Caco-2 (cell line): ENCODE measurements at regions of chrX and their contacts with region 1.

Region 1: DNA sequence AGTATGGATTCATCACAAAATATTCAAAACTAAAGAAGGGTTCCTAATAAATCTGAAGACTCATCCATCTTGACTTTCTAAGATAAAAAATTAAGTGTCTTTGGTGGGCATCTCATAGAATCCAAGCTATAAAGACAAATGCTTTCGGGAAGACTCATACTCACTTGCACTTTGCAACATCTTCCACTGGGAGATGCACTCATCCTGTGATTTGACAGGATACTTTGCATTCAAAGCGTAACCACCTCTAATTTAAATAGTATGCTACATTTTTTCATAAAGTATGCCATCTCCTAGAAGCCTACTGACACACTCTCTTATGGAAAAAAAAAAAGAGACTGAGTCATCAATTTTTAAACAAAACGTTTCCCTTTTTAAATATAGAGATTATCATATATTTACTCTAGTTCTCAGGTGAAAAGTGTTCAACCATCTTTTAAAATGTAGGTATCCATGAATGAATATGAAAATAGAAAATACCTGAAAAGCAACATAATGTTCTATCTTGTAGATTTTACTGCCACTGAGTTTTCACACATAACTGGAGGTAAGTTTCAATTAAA is 119.6 kb downstream of the KLHL13 start:
- DNase-seq: no peak
- H3K4me3 ChIP-seq: no peak overlapping the region
- H3K4me3 Mint-ChIP-seq: no peak overlapping the region
- H3K27ac Mint-ChIP-seq: no peak overlapping the region
- H3K4me1 ChIP-seq: no peaks in the 10 kb centered on the region
- H3K4me1 Mint-ChIP-seq: peaks cover 3% of the 10 kb centered on the region
- H3K27me3 ChIP-seq: no peaks in the 10 kb centered on the region
- H3K27me3 Mint-ChIP-seq: no peaks in the 10 kb centered on the region
- CTCF ChIP-seq: peak in 1 of 2 experiments; percentile 65

Region 2: GRCh38 chrX:118116713-118117550 is 119.9 kb after region 1 on chrX and contains the start of gene KLHL13:
- CTCF ChIA-PET with region 1: no interaction called
- POLR2A ChIA-PET with region 1: no interaction called
- intact Hi-C with region 1: loop called (anchors 1 kb)
- DNase-seq: peak; percentile 49 to 50
- H3K4me3 ChIP-seq: peak within 1 kb of the TSS; percentile 79
- H3K4me3 Mint-ChIP-seq: peak within 1 kb of the TSS; percentile 84
- H3K27ac Mint-ChIP-seq: peak within 1 kb of the TSS; percentile 42
- H3K4me1 ChIP-seq: no peaks in the 10 kb centered on the region
- H3K4me1 Mint-ChIP-seq: peaks cover 19% of the 10 kb centered on the region
- H3K27me3 ChIP-seq: no peaks in the 10 kb centered on the region
- H3K27me3 Mint-ChIP-seq: no peaks in the 10 kb centered on the region
- CTCF ChIP-seq: peak in 1 of 2 experiments; percentile 15
- total RNA-seq, gene KLHL13: 8.7 and 9.1 TPM in 2 replicates

Region 3: GRCh38 chrX:118183606-118184005 is 186.6 kb after region 1 on chrX:
- CTCF ChIA-PET with region 1: no interaction called
- POLR2A ChIA-PET with region 1: no interaction called
- intact Hi-C with region 1: loop called (anchors 2 kb)
- DNase-seq: no peak
- H3K4me3 ChIP-seq: no peak overlapping the region
- H3K4me3 Mint-ChIP-seq: no peak overlapping the region
- H3K27ac Mint-ChIP-seq: no peak overlapping the region
- H3K4me1 ChIP-seq: no peaks in the 10 kb centered on the region
- H3K4me1 Mint-ChIP-seq: no peaks in the 10 kb centered on the region
- H3K27me3 ChIP-seq: no peaks in the 10 kb centered on the region
- H3K27me3 Mint-ChIP-seq: no peaks in the 10 kb centered on the region
- CTCF ChIP-seq: peak in 1 of 2 experiments; percentile 10

Region 4: GRCh38 chrX:118226090-118226428 is 229.1 kb after region 1 on chrX:
- CTCF ChIA-PET with region 1: interaction called, 7 read pairs
- POLR2A ChIA-PET with region 1: no interaction called
- intact Hi-C with region 1: loop called (anchors 1 kb)
- DNase-seq: peak in 1 of 2 experiments; percentile 3
- H3K4me3 ChIP-seq: no peak overlapping the region
- H3K4me3 Mint-ChIP-seq: no peak overlapping the region
- H3K27ac Mint-ChIP-seq: no peak overlapping the region
- H3K4me1 ChIP-seq: no peaks in the 10 kb centered on the region
- H3K4me1 Mint-ChIP-seq: no peaks in the 10 kb centered on the region
- H3K27me3 ChIP-seq: no peaks in the 10 kb centered on the region
- H3K27me3 Mint-ChIP-seq: no peaks in the 10 kb centered on the region
- CTCF ChIP-seq: peak in 1 of 2 experiments; percentile 45

Region 5: DNA sequence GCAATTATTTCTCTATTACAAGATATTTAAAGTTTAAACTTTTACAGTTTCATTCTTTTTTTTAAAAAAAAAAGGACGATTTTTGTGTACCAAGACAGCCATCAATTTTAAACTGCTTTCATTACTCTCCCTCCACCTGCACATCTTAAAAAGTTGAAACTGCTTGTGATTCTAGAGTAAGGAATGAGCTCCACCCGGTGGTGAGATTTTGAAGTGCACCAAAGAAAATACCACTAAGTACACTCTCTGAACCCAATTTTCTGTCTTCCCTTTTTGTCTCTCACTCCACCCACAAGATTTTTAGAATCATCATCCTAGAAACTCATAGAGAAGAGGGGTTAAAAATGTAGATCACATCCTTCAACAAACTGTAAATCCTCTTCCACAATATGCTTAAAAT is 257.6 kb after region 1 on chrX:
- CTCF ChIA-PET with region 1: no interaction called
- POLR2A ChIA-PET with region 1: no interaction called
- intact Hi-C with region 1: loop called (anchors 1 kb)
- DNase-seq: peak in 1 of 2 experiments; percentile 49
- H3K4me3 ChIP-seq: no peak overlapping the region
- H3K4me3 Mint-ChIP-seq: no peak overlapping the region
- H3K27ac Mint-ChIP-seq: no peak overlapping the region
- H3K4me1 ChIP-seq: no peaks in the 10 kb centered on the region
- H3K4me1 Mint-ChIP-seq: no peaks in the 10 kb centered on the region
- H3K27me3 ChIP-seq: no peaks in the 10 kb centered on the region
- H3K27me3 Mint-ChIP-seq: peaks cover 8% of the 10 kb centered on the region
- CTCF ChIP-seq: peak; percentile 47 to 57